ENCODE measurements at regions of chr9 and their contacts with region 1.

Region 1: DNA sequence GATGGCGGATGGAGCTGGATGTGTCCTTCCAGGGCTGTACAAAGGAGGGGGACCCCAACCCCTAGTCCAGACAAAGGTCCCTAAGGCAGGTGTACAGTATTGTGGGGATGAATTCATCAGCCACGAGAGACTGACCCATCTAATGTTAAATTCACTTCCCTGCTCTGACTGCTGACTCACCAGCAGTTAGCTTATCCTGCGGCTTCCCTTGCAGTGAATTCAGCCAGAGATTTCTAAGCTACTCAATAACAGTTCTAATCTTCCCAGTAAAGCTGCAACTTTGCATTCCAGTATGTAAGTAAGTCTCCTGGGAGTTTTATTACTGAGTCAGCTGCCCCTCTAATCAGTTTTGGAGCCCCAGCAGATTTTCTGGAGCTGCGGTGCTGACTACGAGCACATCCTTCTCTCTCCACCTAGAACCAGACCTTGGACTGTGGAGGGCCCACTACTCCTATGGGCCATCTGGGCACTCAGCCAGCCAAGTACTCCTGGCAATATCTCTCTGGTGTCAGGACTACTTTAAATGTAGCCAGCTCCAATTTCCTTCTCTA is 16.1 kb downstream of the B4GALT1 start:
- DNase-seq: no peak
- ATAC-seq: peak in 1 of 4 experiments; percentile 26
- H3K4me3 ChIP-seq: no peak overlapping the region
- H3K4me3 Mint-ChIP-seq: no peak overlapping the region
- H3K27ac ChIP-seq: peak overlapping the region; percentile 44
- H3K27ac Mint-ChIP-seq: peak overlapping the region; percentile 72 to 94
- H3K4me1 ChIP-seq: peaks cover 25 to 60% of the 10 kb centered on the region in 2 experiments
- H3K4me1 Mint-ChIP-seq: peaks cover 75 to 92% (median 84%) of the 10 kb centered on the region in 3 donors
- H3K27me3 ChIP-seq: no peaks in the 10 kb centered on the region
- H3K27me3 Mint-ChIP-seq: no peaks in the 10 kb centered on the region

Region 2: DNA sequence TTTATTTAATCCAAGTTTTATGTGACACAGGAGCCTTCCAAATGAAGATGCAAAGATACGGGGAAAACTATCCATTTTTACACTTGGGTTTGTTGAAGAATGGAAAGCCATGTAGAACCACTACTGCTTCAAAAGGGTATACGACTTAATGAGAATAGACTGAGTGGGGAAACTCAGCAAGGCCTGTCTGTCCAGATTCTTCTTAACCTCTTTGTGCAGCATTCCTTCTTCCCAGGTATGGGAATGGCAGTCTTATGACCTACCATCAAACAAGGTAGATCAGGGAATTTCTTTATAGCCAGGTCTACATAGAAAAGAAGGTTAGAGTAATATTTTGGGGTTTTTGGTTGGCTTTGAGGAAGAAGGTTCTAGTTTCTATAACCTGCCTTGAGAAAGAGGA is 173.0 kb before region 1 on chr9:
- CTCF ChIA-PET with region 1: interaction called in 1 of 2 experiments, 12 read pairs
- POLR2A ChIA-PET with region 1: no interaction called
- DNase-seq: no peak
- ATAC-seq: no peak
- H3K4me3 ChIP-seq: no peak overlapping the region
- H3K4me3 Mint-ChIP-seq: no peak overlapping the region
- H3K27ac ChIP-seq: no peak overlapping the region
- H3K27ac Mint-ChIP-seq: no peak overlapping the region
- H3K4me1 ChIP-seq: no peaks in the 10 kb centered on the region
- H3K4me1 Mint-ChIP-seq: no peaks in the 10 kb centered on the region
- H3K27me3 ChIP-seq: no peaks in the 10 kb centered on the region
- H3K27me3 Mint-ChIP-seq: no peaks in the 10 kb centered on the region

Region 3: GRCh38 chr9:33167046-33167808 is 16.1 kb after region 1 on chr9 and contains the start of gene B4GALT1:
- CTCF ChIA-PET with region 1: interaction called in 1 of 2 experiments, 10 read pairs
- POLR2A ChIA-PET with region 1: interaction called, 7 to 15 read pairs
- DNase-seq: peak; percentile 88 to 98 (median 95)
- ATAC-seq: peak; percentile 85 to 91 (median 86)
- H3K4me3 ChIP-seq: peak within 1 kb of the TSS; percentile 84 to 97
- H3K4me3 Mint-ChIP-seq: peak within 1 kb of the TSS; percentile 86 to 97 (median 96)
- H3K27ac ChIP-seq: peak within 1 kb of the TSS; percentile 98
- H3K27ac Mint-ChIP-seq: peak within 1 kb of the TSS; percentile 99
- H3K4me1 ChIP-seq: peaks cover 35 to 56% of the 10 kb centered on the region in 2 experiments
- H3K4me1 Mint-ChIP-seq: peaks cover 62 to 64% (median 62%) of the 10 kb centered on the region in 3 donors
- H3K27me3 ChIP-seq: no peaks in the 10 kb centered on the region
- H3K27me3 Mint-ChIP-seq: no peaks in the 10 kb centered on the region
- total RNA-seq, gene B4GALT1: 33.2 to 85.3 (median 44.1) TPM

Region 4: GRCh38 chr9:33290247-33291030 is 139.4 kb after region 1 on chr9 and contains the start of gene NFX1:
- CTCF ChIA-PET with region 1: no interaction called
- POLR2A ChIA-PET with region 1: interaction called, 15 to 17 read pairs
- DNase-seq: peak; percentile 96 to 100 (median 99)
- ATAC-seq: peak; percentile 86 to 90 (median 88)
- H3K4me3 ChIP-seq: peak within 1 kb of the TSS; percentile 85 to 88
- H3K4me3 Mint-ChIP-seq: peak within 1 kb of the TSS; percentile 84 to 99 (median 98)
- H3K27ac ChIP-seq: peak within 1 kb of the TSS; percentile 100
- H3K27ac Mint-ChIP-seq: peak within 1 kb of the TSS; percentile 100
- H3K4me1 ChIP-seq: peaks cover 19 to 53% of the 10 kb centered on the region in 2 experiments
- H3K4me1 Mint-ChIP-seq: peaks cover 37 to 65% (median 61%) of the 10 kb centered on the region in 3 donors
- H3K27me3 ChIP-seq: no peaks in the 10 kb centered on the region
- H3K27me3 Mint-ChIP-seq: no peaks in the 10 kb centered on the region
- total RNA-seq, gene NFX1: 41.5 to 55.8 (median 48.5) TPM